Adrenal gland (tissue), 19 donors: ENCODE measurements at regions of chr15 and their contacts with region 1.

Region 1: GRCh38 chr15:44738340-44738984 is 2.1 kb downstream of the TRIM69 start:
- DNase-seq: no peak
- H3K4me3 ChIP-seq: no peak overlapping the region
- H3K27ac ChIP-seq: no peak overlapping the region
- H3K4me1 ChIP-seq: peaks cover 0 to 5% of the 10 kb centered on the region in 2 donors
- H3K27me3 ChIP-seq: no peaks in the 10 kb centered on the region
- CTCF ChIP-seq: peak; percentile 51 to 88 (median 78)
- POLR2A ChIP-seq: no peak

Region 2: GRCh38 chr15:44570361-44570760 is 168.1 kb before region 1 on chr15:
- intact Hi-C with region 1: loop called in 1 of 2 experiments (anchors 10 kb)
- DNase-seq: no peak
- H3K4me3 ChIP-seq: no peak overlapping the region
- H3K27ac ChIP-seq: no peak overlapping the region
- H3K4me1 ChIP-seq: no peaks in the 10 kb centered on the region
- H3K27me3 ChIP-seq: no peaks in the 10 kb centered on the region
- CTCF ChIP-seq: no peak
- POLR2A ChIP-seq: no peak

Region 3: DNA sequence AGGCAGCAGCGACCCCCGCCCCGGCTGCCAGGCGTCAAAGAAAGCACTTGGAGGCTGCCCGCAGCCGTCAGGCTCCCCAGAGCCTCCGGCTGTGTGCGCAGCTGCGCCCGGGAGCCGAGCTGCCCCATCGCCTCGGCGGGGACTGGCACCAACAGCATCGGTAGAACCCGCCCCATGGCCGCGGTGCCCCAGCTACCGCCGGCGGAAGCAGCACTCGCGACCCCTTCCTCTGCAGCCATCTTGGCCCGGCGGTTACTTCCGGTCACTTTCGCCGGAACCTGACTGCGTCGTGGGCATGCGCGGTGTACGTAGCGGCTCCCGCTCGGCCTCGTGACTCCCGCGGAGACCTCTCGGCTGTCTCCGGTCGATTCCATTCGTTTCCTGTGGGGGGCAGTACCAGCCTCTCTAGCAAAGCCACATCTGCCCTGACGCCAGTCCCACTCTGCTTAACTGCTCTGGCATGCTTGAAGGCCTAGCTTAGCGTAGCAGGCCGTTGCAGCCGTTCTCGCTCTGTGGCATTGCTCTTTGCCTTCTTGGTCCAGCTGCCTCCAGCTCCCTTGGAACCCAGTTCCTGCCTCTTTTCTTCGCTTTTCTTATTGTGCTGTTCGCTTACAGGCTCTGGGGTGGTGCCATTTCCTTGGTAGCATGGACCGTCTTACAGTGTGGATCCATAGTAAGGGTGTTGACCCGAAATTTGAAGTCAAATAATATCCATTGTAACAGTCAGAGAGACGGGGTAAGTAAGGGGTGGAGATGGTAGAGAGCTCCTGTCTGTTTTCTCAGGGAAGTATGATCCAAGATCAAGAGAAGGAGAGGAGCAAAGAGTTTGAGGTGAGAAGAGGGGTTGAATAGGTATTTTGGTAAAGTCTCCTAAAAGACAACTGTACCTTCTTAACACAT is 74.8 kb before region 1 on chr15 and contains the start of gene SPG11:
- intact Hi-C with region 1: loop called (anchors 5 to 10 kb)
- DNase-seq: peak; percentile 98 to 99 (median 99)
- H3K4me3 ChIP-seq: peak within 1 kb of the TSS; percentile 57 to 98 (median 83)
- H3K27ac ChIP-seq: peak within 1 kb of the TSS; percentile 94 to 99 (median 96)
- H3K4me1 ChIP-seq: peaks cover 9 to 20% of the 10 kb centered on the region in 2 donors
- H3K27me3 ChIP-seq: no peaks in the 10 kb centered on the region
- CTCF ChIP-seq: peak; percentile 87 to 99 (median 98)
- POLR2A ChIP-seq: peak; percentile 81 to 96
- total RNA-seq, gene SPG11: 48.5 to 122 (median 78.6) TPM